ENCODE measurements at regions of chr12 and their contacts with region 1.

Region 1: DNA sequence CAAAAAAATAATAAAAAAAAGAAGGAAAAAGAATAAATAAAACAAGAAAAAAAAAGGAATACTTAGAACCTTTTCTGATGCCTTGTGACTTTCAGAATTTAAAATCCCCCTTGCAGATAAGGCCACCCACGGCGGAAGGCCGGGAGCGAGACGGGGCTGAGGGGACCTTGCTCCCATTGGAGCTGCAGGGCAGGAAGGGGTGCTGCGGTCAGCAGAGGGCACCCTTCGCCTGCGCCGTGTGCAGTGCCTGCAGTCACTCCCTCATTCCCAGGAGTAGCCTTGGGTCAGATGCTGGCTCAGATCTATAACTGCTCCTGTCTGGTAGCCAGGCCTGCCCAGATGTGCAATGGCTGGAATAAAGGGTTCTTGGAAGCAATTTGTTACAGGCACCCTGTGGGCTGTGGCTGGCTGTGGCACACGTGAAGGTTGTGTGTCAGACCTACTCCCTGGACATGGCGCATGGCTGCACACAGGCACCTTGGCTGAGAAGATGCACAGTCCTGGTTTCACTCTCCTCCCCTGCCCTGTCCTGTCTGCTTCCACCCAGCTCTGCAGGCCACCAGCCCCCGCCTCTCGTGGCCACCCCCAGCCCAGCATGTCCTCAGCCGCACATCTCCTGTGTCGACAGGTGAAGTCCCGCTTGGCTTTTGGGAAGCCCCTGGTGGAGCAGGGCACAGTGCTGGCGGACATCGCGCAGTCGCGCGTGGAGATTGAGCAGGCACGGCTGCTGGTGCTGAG is 13.4 kb upstream of the ALDH2 start:
- DNase-seq: peak in 1 of 2 donors; percentile 75
- H3K4me3 ChIP-seq: no peak overlapping the region
- H3K27ac ChIP-seq: no peak overlapping the region
- H3K4me1 ChIP-seq: peaks cover 4 to 25% of the 10 kb centered on the region in 2 donors
- H3K27me3 ChIP-seq: no peaks in the 10 kb centered on the region
- CTCF ChIP-seq: peak; percentile 76 to 88 (median 81)

Region 2: GRCh38 chr12:111788178-111788654 is 34.9 kb after region 1 on chr12:
- intact Hi-C with region 1: loop called (anchors 5 kb)
- DNase-seq: no peak
- H3K4me3 ChIP-seq: no peak overlapping the region
- H3K27ac ChIP-seq: no peak overlapping the region
- H3K4me1 ChIP-seq: no peaks in the 10 kb centered on the region
- H3K27me3 ChIP-seq: no peaks in the 10 kb centered on the region
- CTCF ChIP-seq: peak in 1 of 3 experiments; percentile 34

Region 3: DNA sequence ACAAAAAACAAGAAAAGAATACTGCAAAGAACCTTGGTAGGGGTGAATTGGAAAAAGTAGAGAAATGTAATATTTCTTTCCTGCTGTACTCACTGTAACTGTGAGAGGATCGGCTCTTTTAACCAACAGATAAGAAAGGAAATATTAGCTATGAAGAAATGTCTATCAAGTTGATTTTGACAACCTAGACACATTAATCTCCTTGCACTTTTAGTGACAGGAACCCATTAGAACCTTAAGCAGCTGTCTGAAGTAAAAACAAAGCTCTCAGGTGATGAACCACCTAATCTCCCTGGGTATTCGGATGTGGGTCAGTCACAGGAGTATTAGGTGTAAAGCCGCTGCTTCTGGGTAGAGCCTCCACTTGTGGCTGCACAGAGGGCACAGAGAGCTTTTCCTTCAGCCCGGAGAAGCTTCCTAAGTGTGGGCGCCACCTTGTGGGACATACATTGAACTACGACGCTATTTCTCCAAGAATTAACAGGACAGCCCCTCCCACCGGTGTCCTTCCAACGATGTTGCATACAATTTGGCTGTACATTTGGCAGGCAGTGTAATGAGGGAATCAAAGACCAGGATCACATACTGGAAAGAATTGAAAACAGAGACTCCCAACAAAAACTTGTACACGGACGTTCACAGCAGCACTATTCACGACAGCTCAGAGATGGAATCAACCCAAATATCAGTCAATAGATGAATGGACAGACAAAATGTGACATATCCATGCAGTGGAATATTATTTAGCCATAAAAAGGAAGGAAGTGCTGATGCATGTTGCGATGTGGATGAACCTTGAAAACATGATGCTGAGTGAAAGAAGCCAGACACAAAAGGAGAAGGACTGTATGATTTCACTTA is 59.8 kb after region 1 on chr12:
- intact Hi-C with region 1: loop called (anchors 1 kb)
- DNase-seq: peak; percentile 19 to 89
- H3K4me3 ChIP-seq: no peak overlapping the region
- H3K27ac ChIP-seq: no peak overlapping the region
- H3K4me1 ChIP-seq: no peaks in the 10 kb centered on the region
- H3K27me3 ChIP-seq: no peaks in the 10 kb centered on the region
- CTCF ChIP-seq: peak; percentile 78 to 88 (median 85)